MCF 10A (cell line): ENCODE measurements at regions of chr2 and their contacts with region 1.

Region 1: GRCh38 chr2:223797811-223798721 is 39.3 kb downstream of the AP1S3 start:
- DNase-seq: peak; percentile 73
- H3K4me3 Mint-ChIP-seq: no peak overlapping the region
- H3K27ac Mint-ChIP-seq: peak overlapping the region; percentile 81
- H3K4me1 Mint-ChIP-seq: peaks cover 30% of the 10 kb centered on the region
- H3K27me3 Mint-ChIP-seq: no peaks in the 10 kb centered on the region
- CTCF ChIP-seq: peak; percentile 58

Region 2: GRCh38 chr2:222969491-222969890 is 828.6 kb before region 1 on chr2:
- CTCF ChIA-PET with region 1: interaction called, 30 read pairs
- POLR2A ChIA-PET with region 1: interaction called, 3 read pairs
- intact Hi-C with region 1: loop called (anchors 1 kb)
- DNase-seq: peak; percentile 80
- H3K4me3 Mint-ChIP-seq: no peak overlapping the region
- H3K27ac Mint-ChIP-seq: no peak overlapping the region
- H3K4me1 Mint-ChIP-seq: peaks cover 6% of the 10 kb centered on the region
- H3K27me3 Mint-ChIP-seq: no peaks in the 10 kb centered on the region
- CTCF ChIP-seq: no peak

Region 3: DNA sequence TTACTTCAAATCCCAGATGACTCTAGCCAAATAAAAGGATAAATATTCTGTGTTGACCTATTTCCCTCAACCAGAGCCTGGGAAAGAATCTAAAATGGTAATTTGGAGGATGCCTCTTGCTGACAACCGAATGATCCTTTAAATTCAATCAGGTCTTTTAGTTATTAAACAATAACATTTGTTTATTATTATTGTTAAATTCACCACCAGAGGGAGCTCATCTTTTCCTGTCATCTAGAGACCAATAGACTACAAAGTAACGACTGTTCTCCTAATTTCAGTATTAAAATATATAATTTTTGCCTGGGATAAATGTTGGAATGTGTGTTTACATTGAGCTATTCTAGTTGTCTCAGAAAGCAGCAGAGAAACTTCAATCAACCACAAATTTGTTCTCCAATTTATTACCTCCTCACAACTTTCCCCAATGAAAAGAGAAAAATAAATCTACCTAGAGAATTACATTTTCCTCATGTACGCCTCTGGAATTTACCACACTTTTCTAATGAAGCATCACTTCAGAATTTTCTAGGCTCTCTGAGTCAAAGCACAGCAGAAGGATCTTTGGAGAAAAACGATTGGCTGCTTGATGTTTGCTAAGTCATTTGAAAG is 338.6 kb before region 1 on chr2:
- CTCF ChIA-PET with region 1: interaction called, 8 read pairs
- POLR2A ChIA-PET with region 1: no interaction called
- intact Hi-C with region 1: loop called (anchors 2 kb)
- DNase-seq: peak; percentile 49
- H3K4me3 Mint-ChIP-seq: no peak overlapping the region
- H3K27ac Mint-ChIP-seq: no peak overlapping the region
- H3K4me1 Mint-ChIP-seq: peaks cover 25% of the 10 kb centered on the region
- H3K27me3 Mint-ChIP-seq: no peaks in the 10 kb centered on the region
- CTCF ChIP-seq: peak; percentile 47

Region 4: DNA sequence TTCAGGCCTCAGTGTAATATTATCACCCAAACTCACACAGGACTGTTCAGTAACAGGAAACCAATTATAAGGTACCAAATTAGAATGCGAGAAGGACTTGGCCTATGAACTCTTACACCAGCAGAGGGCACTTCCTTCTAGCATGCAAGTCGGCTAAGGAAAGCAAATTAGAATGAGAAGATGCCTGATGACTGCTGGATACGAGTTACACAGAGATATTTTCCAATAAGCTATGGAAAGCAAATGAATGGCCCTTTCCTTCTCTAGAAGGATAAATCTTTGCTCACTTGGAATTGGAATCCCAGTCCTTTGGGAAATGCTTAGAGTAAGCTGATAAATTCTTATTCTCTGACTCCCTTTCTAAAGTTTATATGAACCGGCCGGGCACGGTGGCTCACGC is 70.5 kb before region 1 on chr2:
- CTCF ChIA-PET with region 1: interaction called, 35 read pairs
- POLR2A ChIA-PET with region 1: interaction called, 19 read pairs
- intact Hi-C with region 1: loop called (anchors 1 kb)
- DNase-seq: peak; percentile 80
- H3K4me3 Mint-ChIP-seq: no peak overlapping the region
- H3K27ac Mint-ChIP-seq: no peak overlapping the region
- H3K4me1 Mint-ChIP-seq: peaks cover 24% of the 10 kb centered on the region
- H3K27me3 Mint-ChIP-seq: no peaks in the 10 kb centered on the region
- CTCF ChIP-seq: peak; percentile 42

Region 5: DNA sequence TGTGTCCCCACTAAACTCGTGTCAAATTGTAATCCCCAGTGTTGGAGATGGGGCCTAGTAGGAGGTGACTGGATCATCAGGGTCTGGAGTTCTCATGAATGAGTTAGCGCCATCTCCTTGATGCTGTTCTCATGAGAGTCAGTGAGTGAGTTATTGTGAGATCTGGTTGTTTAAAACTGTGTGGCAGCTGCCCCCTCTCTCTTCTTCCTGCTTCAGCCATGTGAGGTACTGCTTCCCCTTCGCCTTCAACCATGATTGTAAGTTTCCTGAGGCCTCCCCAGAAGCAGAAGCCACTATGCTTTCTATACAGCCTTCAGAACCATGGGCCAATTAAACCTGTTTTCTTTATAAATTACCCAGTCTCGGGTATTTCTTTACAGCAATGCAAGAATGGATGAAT is 11.1 kb before region 1 on chr2:
- CTCF ChIA-PET with region 1: interaction called, 11 read pairs
- POLR2A ChIA-PET with region 1: interaction called, 4 read pairs
- intact Hi-C with region 1: no loop called
- DNase-seq: no peak
- H3K4me3 Mint-ChIP-seq: no peak overlapping the region
- H3K27ac Mint-ChIP-seq: peak overlapping the region; percentile 18
- H3K4me1 Mint-ChIP-seq: no peaks in the 10 kb centered on the region
- H3K27me3 Mint-ChIP-seq: no peaks in the 10 kb centered on the region
- CTCF ChIP-seq: no peak

Region 6: DNA sequence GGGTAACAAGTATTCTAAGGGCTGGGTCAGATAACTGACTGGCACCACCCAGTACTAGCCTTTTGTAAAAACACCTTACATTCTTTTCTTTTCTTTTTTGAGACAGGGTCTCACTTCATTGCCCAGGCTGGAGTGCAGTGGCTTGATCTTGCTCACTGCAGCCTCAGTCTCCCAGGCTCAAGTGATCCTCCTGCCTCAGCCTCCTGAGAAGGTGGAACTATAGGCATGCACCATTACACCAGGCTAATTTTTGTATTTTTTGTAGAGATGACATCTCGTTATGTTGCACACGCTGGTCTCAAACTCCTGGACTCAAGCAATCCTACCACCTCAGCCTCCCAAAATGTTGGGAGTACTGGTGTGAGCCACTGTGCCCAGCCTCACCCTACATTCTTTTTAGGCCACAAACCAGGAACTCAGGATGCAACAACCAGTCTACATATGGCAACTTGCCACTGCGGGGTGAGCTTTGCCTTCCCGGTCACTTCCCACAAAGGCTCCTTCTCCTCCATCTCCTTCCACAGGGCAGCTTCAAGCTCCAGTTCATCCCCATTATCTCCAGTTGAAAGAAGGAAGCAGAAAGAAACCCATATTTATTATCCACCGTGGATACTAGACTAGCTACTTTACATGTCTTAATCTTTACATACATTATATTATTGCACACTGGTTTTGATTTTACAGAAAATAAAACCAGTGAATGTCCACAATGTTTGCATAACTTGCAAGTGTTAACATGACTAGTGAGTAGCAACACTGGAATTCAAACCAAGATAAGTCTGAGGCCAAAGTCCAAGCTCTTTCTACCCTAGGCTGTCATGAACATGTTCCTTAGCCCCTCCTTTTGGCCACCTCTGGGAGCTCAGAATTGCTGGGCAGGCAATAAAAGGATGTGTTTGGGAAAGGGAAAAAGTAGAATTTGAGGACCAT is 63.0 kb after region 1 on chr2:
- CTCF ChIA-PET with region 1: interaction called, 8 read pairs
- POLR2A ChIA-PET with region 1: interaction called, 9 read pairs
- intact Hi-C with region 1: loop called (anchors 2 kb)
- DNase-seq: peak; percentile 94
- H3K4me3 Mint-ChIP-seq: peak overlapping the region; percentile 66
- H3K27ac Mint-ChIP-seq: peak overlapping the region; percentile 96
- H3K4me1 Mint-ChIP-seq: peaks cover 15% of the 10 kb centered on the region
- H3K27me3 Mint-ChIP-seq: no peaks in the 10 kb centered on the region
- CTCF ChIP-seq: no peak